Dendritic cell treated with granulocyte-macrophage colony-stimulating factor and Interleukin-4, amounts not matched to agents 40 ng/mL and 50 ng/mL, for 4 days (primary cell): ENCODE measurements at regions of chr2 and their contacts with region 1.

Region 1: GRCh38 chr2:61764035-61764800 is 89.6 kb downstream of the FAM161A start:
- H3K4me3 Mint-ChIP-seq: peak overlapping the region; percentile 89
- H3K27ac Mint-ChIP-seq: peak overlapping the region; percentile 99
- H3K4me1 Mint-ChIP-seq: no peaks in the 10 kb centered on the region
- H3K27me3 Mint-ChIP-seq: no peaks in the 10 kb centered on the region

Region 2: GRCh38 chr2:60353406-60353800 is 1410.8 kb before region 1 on chr2:
- intact Hi-C with region 1: no loop called
- H3K4me3 Mint-ChIP-seq: no peak overlapping the region
- H3K27ac Mint-ChIP-seq: no peak overlapping the region
- H3K4me1 Mint-ChIP-seq: peaks cover 37% of the 10 kb centered on the region
- H3K27me3 Mint-ChIP-seq: peaks cover 6% of the 10 kb centered on the region

Region 3: DNA sequence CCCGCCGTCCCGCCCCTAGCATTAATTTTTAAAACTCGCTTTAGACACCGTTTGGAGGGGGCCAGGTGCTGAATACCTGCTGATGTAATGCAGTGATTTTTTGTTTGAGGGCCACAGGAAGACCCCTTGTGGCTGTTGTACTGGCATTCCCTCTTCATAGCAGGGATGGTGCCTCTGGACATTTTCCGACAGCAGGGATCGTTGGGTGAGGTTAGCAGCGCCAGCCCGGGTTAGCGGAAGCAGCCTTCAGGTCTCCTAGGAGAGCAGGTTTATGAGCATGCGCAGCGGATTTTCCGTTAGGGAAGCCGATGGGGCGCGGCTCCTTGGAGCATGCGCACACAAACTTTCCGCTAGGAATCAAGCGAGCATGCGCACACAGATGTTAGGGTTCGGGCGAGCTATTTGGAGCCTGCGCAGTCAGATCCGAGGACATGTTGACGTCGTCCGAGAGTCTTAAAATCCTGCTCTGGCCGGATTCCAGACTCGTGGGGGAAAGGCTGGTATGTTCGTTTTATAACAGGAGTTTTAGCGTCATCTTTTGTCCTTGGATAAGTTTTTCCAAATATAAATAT is 619.4 kb before region 1 on chr2:
- intact Hi-C with region 1: loop called (anchors 10 kb)
- H3K4me3 Mint-ChIP-seq: peak overlapping the region; percentile 83
- H3K27ac Mint-ChIP-seq: peak overlapping the region; percentile 88
- H3K4me1 Mint-ChIP-seq: no peaks in the 10 kb centered on the region
- H3K27me3 Mint-ChIP-seq: no peaks in the 10 kb centered on the region

Region 4: GRCh38 chr2:61694312-61695274 is 69.6 kb before region 1 on chr2:
- intact Hi-C with region 1: loop called (anchors 1 kb)
- H3K4me3 Mint-ChIP-seq: peak overlapping the region; percentile 96
- H3K27ac Mint-ChIP-seq: peak overlapping the region; percentile 97
- H3K4me1 Mint-ChIP-seq: peaks cover 11% of the 10 kb centered on the region
- H3K27me3 Mint-ChIP-seq: peaks cover 3% of the 10 kb centered on the region

Region 5: GRCh38 chr2:61816480-61817355 is 52.5 kb after region 1 on chr2:
- intact Hi-C with region 1: no loop called
- H3K4me3 Mint-ChIP-seq: no peak overlapping the region
- H3K27ac Mint-ChIP-seq: no peak overlapping the region
- H3K4me1 Mint-ChIP-seq: no peaks in the 10 kb centered on the region
- H3K27me3 Mint-ChIP-seq: no peaks in the 10 kb centered on the region

Region 6: GRCh38 chr2:61854474-61855182 is 90.4 kb after region 1 on chr2:
- intact Hi-C with region 1: loop called (anchors 1 kb)
- H3K4me3 Mint-ChIP-seq: peak overlapping the region; percentile 100
- H3K27ac Mint-ChIP-seq: peak overlapping the region; percentile 89
- H3K4me1 Mint-ChIP-seq: peaks cover 15% of the 10 kb centered on the region
- H3K27me3 Mint-ChIP-seq: peaks cover 5% of the 10 kb centered on the region

Region 7: DNA sequence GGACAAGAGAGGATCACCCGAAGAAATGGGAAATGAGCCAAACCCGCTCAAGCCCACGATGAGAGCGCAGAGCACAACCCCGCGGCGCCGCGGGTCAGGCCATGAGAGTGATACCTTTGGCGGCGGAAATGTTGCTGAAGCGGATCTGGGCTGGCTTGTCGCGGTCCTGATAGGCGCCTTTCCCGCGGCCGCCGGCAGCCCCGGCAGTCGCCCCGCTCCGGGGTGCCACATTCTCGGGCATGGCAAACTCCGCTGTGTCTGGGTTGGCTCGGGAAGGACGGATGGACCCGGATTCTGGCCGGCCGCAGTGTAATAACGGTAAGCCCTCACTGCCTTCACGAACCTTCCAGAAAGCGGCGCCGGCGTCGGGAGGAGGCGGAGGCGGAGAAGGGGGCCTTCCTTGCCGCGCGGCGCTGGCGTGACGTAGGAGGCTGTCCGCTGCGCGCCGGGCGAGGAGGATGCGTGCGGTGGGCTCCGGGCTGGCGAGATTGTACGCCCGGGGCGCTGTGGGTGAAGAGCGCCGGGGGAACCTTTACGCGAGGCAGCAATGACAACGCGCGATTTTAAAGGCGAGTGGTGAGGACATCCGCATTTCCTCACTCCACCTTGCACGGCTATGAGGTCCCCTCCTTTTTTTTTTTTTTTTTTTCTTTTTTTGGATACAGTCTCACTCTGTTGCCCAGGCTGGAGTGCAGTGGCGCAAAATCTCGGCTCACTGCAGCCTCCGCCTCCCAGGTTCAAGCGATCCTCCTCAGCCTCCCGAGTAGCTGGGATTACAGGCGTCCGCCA is 124.2 kb after region 1 on chr2 and contains the start of gene CCT4:
- intact Hi-C with region 1: loop called (anchors 2 kb)
- H3K4me3 Mint-ChIP-seq: peak within 1 kb of the TSS; percentile 94
- H3K27ac Mint-ChIP-seq: peak within 1 kb of the TSS; percentile 97
- H3K4me1 Mint-ChIP-seq: peaks cover 19% of the 10 kb centered on the region
- H3K27me3 Mint-ChIP-seq: no peaks in the 10 kb centered on the region

Region 8: DNA sequence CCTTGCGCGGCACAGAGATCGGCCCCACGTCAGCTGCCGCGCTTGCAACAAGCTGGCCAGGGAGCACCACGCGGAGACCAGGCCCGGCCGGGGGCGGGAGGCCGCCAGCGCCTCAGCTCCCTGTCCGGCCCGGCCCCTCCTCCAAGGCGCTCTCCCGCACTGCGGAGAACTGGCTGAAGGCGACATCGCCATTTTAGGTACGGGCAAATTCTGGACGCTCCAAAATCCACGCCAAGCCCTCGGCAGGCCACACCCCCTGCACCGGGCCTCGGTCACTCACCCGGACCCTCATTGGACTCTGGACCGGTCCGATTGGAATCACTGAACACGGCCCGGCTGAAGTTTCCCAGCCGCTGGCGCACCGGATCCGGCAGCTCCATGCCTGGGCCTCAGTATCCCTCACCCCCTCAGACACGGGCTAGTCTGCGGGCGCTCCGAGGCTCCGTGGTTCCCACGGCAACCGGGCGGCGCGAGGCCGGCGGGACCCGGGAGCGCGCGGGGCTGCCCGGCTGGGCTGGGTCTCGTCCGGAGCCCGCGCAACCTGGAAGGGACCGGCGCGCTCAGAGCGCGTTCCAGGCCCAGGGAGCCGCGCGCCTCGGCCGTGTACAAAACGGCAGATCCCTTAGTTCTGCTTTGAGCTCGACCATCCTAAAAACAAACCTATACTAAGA is 741.7 kb after region 1 on chr2 and contains the start of gene TMEM17:
- intact Hi-C with region 1: loop called (anchors 10 kb)
- H3K4me3 Mint-ChIP-seq: peak within 1 kb of the TSS; percentile 83
- H3K27ac Mint-ChIP-seq: peak within 1 kb of the TSS; percentile 82
- H3K4me1 Mint-ChIP-seq: peaks cover 16% of the 10 kb centered on the region
- H3K27me3 Mint-ChIP-seq: no peaks in the 10 kb centered on the region